A673 (cell line): ENCODE measurements at regions of chr18 and their contacts with region 1.

Region 1: DNA sequence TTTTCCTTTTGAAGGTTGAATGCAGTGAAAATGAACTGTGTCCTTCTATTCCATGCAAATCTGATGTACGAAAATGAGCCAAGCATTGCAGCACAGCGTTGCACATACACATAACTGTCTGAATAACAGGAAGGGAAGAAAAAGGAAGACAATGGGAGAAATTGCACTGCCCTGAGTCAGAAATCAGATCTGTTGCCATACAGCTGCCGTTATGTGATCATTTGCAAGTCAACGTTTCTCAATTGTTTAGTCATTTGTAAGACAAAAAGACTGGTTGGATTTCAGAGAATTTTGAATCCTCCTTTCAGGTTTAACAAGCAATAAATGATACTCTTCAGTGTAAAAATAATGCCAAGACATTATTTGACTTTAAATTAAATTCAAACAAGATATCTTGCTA is 284.1 kb downstream of the DSEL start:
- DNase-seq: peak; percentile 87
- H3K4me3 ChIP-seq: peak overlapping the region; percentile 5
- H3K27ac ChIP-seq: peak overlapping the region; percentile 70
- H3K4me1 ChIP-seq: peaks cover 10% of the 10 kb centered on the region
- H3K27me3 ChIP-seq: no peaks in the 10 kb centered on the region
- CTCF ChIP-seq: no peak

Region 2: GRCh38 chr18:66949419-66949818 is 283.0 kb before region 1 on chr18:
- CTCF ChIA-PET with region 1: no interaction called
- POLR2A ChIA-PET with region 1: no interaction called
- intact Hi-C with region 1: no loop called
- DNase-seq: no peak
- H3K4me3 ChIP-seq: no peak overlapping the region
- H3K27ac ChIP-seq: no peak overlapping the region
- H3K4me1 ChIP-seq: no peaks in the 10 kb centered on the region
- H3K27me3 ChIP-seq: no peaks in the 10 kb centered on the region
- CTCF ChIP-seq: no peak

Region 3: DNA sequence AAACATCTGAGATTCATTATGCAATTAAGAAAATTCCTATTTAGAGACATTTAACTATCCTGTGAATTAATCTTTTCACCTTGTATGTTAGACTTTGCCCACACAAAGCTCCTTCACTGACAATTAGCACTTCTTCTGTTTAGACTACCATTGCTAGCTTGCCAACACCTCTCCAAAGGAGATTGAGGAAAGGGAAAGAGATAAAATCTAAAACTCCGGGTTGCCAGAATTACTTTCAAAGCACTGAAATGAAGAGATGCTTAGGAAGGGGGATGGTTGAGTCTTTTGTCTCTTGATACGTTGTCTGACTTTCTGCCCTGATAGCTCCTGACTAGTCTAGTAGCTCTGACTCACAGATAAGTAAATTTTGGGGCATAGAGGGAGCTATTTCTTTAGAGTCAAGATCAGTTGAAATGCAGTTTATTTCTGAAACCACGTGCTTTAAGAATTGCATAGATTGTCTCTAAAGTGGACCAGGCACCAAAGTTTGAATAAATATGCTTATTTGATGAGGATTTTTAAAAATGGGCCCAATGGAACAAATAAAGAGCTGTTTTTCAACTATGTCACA is 358.2 kb after region 1 on chr18:
- CTCF ChIA-PET with region 1: no interaction called
- POLR2A ChIA-PET with region 1: no interaction called
- intact Hi-C with region 1: loop called (anchors 10 kb)
- DNase-seq: peak; percentile 76
- H3K4me3 ChIP-seq: no peak overlapping the region
- H3K27ac ChIP-seq: no peak overlapping the region
- H3K4me1 ChIP-seq: peaks cover 7% of the 10 kb centered on the region
- H3K27me3 ChIP-seq: no peaks in the 10 kb centered on the region
- CTCF ChIP-seq: peak; percentile 45